OCI-LY7 (cell line): ENCODE measurements at regions of chr3 and their contacts with region 1.

Region 1: GRCh38 chr3:172087602-172088580 is 48.5 kb downstream of the FNDC3B start:
- DNase-seq: peak; percentile 29
- H3K4me3 ChIP-seq: no peak overlapping the region
- H3K27ac ChIP-seq: no peak overlapping the region
- H3K4me1 ChIP-seq: peaks cover 23% of the 10 kb centered on the region
- CTCF ChIP-seq: no peak

Region 2: DNA sequence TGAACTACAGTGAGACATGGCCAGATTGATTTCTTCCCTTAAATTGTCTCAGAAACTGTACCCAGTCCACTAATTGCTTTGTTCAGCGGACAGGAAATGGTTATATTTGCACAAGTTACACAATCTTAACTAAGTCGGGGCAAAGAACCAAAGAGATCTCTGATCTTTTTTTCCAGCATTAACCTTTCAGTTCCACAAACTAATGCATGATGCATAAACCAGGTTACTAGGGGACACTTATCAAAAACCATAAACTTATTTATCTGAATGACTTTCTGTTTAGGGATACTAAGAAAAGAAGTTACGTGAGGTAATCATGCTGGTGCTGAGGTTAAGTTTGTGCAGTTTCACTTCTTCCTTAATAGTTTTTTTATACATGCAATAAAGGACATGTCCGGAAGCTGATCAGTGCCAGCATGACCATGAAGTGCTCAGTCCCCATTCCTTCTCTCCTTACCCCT is 26.1 kb before region 1 on chr3:
- CTCF ChIA-PET with region 1: interaction called, 3 read pairs
- POLR2A ChIA-PET with region 1: interaction called, 6 read pairs
- intact Hi-C with region 1: loop called (anchors 1 kb)
- DNase-seq: peak; percentile 71
- H3K4me3 ChIP-seq: peak overlapping the region; percentile 55
- H3K27ac ChIP-seq: peak overlapping the region; percentile 81
- H3K4me1 ChIP-seq: peaks cover 57% of the 10 kb centered on the region
- CTCF ChIP-seq: no peak

Region 3: DNA sequence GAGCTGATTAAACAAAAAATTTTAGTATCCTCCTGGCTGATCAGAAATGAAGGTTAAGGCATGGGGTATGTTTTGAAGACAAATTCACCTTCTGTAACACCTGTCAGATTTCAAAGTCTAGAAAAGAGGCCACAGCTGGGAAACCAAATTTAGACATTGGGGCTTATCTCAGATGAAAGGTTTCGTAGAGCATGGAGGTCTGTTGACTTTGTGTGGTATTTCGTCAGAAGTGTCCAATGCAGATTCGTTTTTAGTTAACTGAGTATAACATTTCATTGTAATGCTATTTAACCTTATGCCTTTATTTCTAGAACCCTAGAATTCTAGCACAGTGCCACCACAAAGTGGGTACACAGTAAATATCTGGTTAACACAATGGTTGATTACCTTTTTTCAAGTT is 13.2 kb after region 1 on chr3:
- CTCF ChIA-PET with region 1: interaction called, 3 read pairs
- POLR2A ChIA-PET with region 1: interaction called, 16 read pairs
- intact Hi-C with region 1: no loop called
- DNase-seq: peak; percentile 92
- H3K4me3 ChIP-seq: peak overlapping the region; percentile 53
- H3K27ac ChIP-seq: peak overlapping the region; percentile 96
- H3K4me1 ChIP-seq: peaks cover 97% of the 10 kb centered on the region
- CTCF ChIP-seq: no peak